Endothelial cell of umbilical vein (primary cell): ENCODE measurements at regions of chr1 and their contacts with region 1.

Region 1: DNA sequence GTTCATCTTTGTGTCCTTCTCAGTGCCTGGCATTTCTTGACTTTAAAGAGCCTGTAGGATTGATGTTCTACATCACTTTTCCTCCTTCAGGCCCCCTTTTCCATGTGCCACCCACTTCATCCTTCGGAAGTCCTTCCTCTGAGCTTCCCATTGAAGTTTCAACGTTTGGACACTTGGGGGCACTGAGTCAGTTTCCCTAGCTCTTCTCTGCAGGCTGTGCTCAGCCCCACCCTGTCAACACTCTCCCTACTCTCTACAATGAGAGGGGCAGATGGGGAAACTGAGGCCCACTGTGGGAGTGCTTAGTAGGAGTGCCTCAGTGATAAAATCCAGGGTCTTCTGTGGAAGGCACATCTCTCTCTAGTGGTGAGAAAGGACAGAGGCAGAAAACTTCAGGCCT is 11.9 kb downstream of the KCNJ10 start:
- DNase-seq: peak; percentile 3
- H3K4me3 ChIP-seq: no peak overlapping the region
- H3K27ac ChIP-seq: no peak overlapping the region
- H3K4me1 ChIP-seq: no peaks in the 10 kb centered on the region
- H3K27me3 ChIP-seq: peaks cover 7 to 17% of the 10 kb centered on the region in 2 experiments
- CTCF ChIP-seq: no peak
- POLR2A ChIP-seq: no peak

Region 2: DNA sequence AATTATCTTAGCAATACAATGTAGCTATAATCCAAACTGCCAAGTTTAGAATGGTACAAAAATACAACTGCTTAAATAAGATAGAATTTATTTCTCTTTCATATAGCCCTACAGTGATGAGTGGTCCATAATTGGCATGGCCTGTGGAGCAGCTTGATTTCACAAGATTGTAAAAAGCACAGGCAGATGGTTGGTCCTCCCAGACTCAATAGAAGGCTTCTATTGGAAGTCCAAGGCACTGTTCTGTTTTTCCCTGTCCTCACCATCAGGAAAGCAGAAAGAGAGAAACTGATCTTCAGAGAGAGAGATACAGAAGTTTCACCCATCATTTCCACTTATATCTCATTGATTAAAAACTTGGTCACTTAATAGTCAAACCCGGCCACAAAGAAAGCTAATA is 1485.9 kb before region 1 on chr1:
- CTCF ChIA-PET with region 1: no interaction called
- POLR2A ChIA-PET with region 1: no interaction called
- dilution Hi-C with region 1: no loop called
- intact Hi-C with region 1: no loop called
- DNase-seq: no peak
- H3K4me3 ChIP-seq: no peak overlapping the region
- H3K27ac ChIP-seq: no peak overlapping the region
- H3K4me1 ChIP-seq: no peaks in the 10 kb centered on the region
- H3K27me3 ChIP-seq: no peaks in the 10 kb centered on the region
- CTCF ChIP-seq: no peak
- POLR2A ChIP-seq: no peak

Region 3: GRCh38 chr1:160046494-160047110 is 11.5 kb before region 1 on chr1:
- CTCF ChIA-PET with region 1: interaction called, 29 read pairs
- POLR2A ChIA-PET with region 1: no interaction called
- dilution Hi-C with region 1: no loop called
- intact Hi-C with region 1: no loop called
- DNase-seq: peak; percentile 21
- H3K4me3 ChIP-seq: no peak overlapping the region
- H3K27ac ChIP-seq: no peak overlapping the region
- H3K4me1 ChIP-seq: no peaks in the 10 kb centered on the region
- H3K27me3 ChIP-seq: peaks cover 16 to 28% of the 10 kb centered on the region in 2 experiments
- CTCF ChIP-seq: peak; percentile 38 to 41
- POLR2A ChIP-seq: no peak

Region 4: GRCh38 chr1:160078512-160079195 is 20.6 kb after region 1 on chr1:
- CTCF ChIA-PET with region 1: interaction called, 21 read pairs
- POLR2A ChIA-PET with region 1: no interaction called
- dilution Hi-C with region 1: no loop called
- intact Hi-C with region 1: no loop called
- DNase-seq: peak; percentile 26
- H3K4me3 ChIP-seq: no peak overlapping the region
- H3K27ac ChIP-seq: no peak overlapping the region
- H3K4me1 ChIP-seq: no peaks in the 10 kb centered on the region
- H3K27me3 ChIP-seq: peaks cover 44 to 56% of the 10 kb centered on the region in 2 experiments
- CTCF ChIP-seq: peak; percentile 80 to 87
- POLR2A ChIP-seq: no peak

Region 5: DNA sequence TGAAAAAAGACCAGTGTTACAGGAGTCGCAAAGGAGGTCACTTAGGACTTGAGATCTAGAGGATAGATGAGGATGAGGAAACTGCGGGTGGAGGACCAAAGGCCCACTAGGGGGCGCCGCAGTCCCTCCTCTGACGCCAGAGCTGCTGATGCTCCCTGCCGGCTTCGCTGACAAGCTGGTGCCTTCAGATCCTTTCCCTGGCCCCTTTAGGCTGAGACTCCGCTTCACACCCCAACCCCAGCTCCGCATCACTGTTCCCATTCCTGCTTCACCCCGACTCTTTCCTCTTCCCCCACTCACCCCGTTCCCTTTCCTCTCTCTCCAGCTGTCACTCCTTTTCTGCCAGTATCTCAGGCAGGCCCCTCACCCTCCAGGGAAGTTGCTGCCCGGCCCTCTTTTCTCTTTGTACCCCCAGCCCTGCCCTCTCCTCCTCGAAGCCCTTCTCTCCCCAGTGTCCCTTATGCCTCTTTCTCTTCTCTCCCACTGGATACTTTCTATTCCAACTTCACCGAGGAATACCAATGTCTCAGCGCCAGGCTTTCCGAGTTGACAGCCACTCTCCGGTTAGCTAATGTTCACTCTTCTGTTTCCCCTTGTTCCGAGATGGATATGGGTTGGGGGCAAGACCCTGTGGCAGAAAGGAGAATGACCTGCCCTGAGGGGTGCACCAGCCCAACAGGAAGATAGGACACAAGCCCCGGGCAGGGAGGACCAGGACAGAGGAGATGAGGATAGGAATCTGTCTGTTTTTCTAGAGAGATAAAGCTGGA is 27.8 kb after region 1 on chr1:
- CTCF ChIA-PET with region 1: interaction called, 12 read pairs
- POLR2A ChIA-PET with region 1: no interaction called
- dilution Hi-C with region 1: no loop called
- intact Hi-C with region 1: no loop called
- DNase-seq: peak; percentile 65
- H3K4me3 ChIP-seq: no peak overlapping the region
- H3K27ac ChIP-seq: no peak overlapping the region
- H3K4me1 ChIP-seq: no peaks in the 10 kb centered on the region
- H3K27me3 ChIP-seq: peaks cover 35 to 37% of the 10 kb centered on the region in 2 experiments
- CTCF ChIP-seq: peak; percentile 82 to 99
- POLR2A ChIP-seq: no peak